ENCODE measurements at regions of chr19 and their contacts with region 1.

Region 1: GRCh38 chr19:43784981-43785808 is 4.4 kb upstream of the KCNN4 start:
- DNase-seq: peak in 1 of 2 donors; percentile 67
- H3K4me3 ChIP-seq: no peak overlapping the region
- H3K27ac ChIP-seq: no peak overlapping the region
- H3K4me1 ChIP-seq: peaks cover 0 to 29% (median 7%) of the 10 kb centered on the region in 4 donors
- H3K27me3 ChIP-seq: peaks cover 0 to 24% of the 10 kb centered on the region in 2 donors
- CTCF ChIP-seq: peak; percentile 92 to 99

Region 2: GRCh38 chr19:43723588-43723987 is 61.6 kb before region 1 on chr19:
- intact Hi-C with region 1: no loop called
- DNase-seq: no peak
- H3K4me3 ChIP-seq: no peak overlapping the region
- H3K27ac ChIP-seq: no peak overlapping the region
- H3K4me1 ChIP-seq: no peaks in the 10 kb centered on the region
- H3K27me3 ChIP-seq: peaks cover 0 to 17% of the 10 kb centered on the region in 2 donors
- CTCF ChIP-seq: no peak

Region 3: DNA sequence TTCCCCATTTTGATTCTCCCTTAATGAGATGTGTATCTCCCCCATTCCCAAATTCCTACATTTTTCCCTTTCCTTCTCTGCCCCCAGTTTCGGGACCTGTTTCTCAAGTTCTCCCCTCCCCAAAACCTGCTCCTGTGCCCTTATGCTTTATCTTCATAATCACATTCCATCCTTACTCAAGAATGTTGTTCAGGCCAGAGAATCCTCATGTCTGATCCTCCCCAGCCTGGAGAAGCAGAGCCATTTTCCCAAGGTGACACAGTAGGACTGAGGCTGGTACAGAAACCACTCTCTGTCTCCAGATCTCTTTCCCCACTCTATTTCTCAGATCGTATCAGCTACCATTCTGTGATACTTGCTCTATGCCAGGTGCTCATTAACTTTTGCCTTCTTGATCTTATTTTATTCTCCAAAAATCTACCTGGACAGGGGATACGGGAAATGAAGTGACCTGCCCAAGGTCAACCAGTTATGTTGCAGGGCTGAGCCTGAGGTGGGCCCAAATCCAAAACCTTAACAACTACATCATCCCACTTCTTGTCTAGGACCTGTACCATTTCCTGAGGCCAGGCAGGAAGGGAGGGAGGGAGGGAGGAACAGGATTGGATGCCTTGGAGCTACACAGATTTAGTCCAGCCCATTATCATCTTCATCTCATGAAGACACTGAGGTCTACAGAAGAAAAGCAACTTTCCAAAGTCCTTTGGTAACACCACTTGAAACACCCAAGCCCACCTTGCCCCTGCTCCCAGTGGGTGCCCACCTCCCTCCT is 41.0 kb before region 1 on chr19:
- intact Hi-C with region 1: loop called (anchors 2 kb)
- DNase-seq: no peak
- H3K4me3 ChIP-seq: no peak overlapping the region
- H3K27ac ChIP-seq: no peak overlapping the region
- H3K4me1 ChIP-seq: no peaks in the 10 kb centered on the region
- H3K27me3 ChIP-seq: no peaks in the 10 kb centered on the region
- CTCF ChIP-seq: no peak